ENCODE measurements at regions of chr16 and their contacts with region 1.

Region 1: GRCh38 chr16:4200000-4200780 is 41.7 kb downstream of the SRL start:
- DNase-seq: peak; percentile 63 to 84
- H3K4me3 ChIP-seq: no peak overlapping the region
- H3K27ac ChIP-seq: no peak overlapping the region
- H3K4me1 ChIP-seq: peaks cover 0 to 8% (median 1%) of the 10 kb centered on the region in 4 donors
- H3K27me3 ChIP-seq: no peaks in the 10 kb centered on the region
- CTCF ChIP-seq: peak; percentile 82 to 86

Region 2: GRCh38 chr16:4261557-4262172 is 61.5 kb after region 1 on chr16:
- intact Hi-C with region 1: loop called (anchors 2 kb)
- DNase-seq: no peak
- H3K4me3 ChIP-seq: no peak overlapping the region
- H3K27ac ChIP-seq: no peak overlapping the region
- H3K4me1 ChIP-seq: peaks cover 0 to 11% (median 4%) of the 10 kb centered on the region in 4 donors
- H3K27me3 ChIP-seq: no peaks in the 10 kb centered on the region
- CTCF ChIP-seq: peak; percentile 63 to 67

Region 3: GRCh38 chr16:4328046-4328503 is 127.9 kb after region 1 on chr16:
- intact Hi-C with region 1: loop called (anchors 10 kb)
- DNase-seq: peak; percentile 78 to 92
- H3K4me3 ChIP-seq: peak overlapping the region; percentile 48 to 58
- H3K27ac ChIP-seq: peak overlapping the region; percentile 76 to 99
- H3K4me1 ChIP-seq: peaks cover 8 to 79% (median 69%) of the 10 kb centered on the region in 4 donors
- H3K27me3 ChIP-seq: no peaks in the 10 kb centered on the region
- CTCF ChIP-seq: peak; percentile 67 to 69

Region 4: GRCh38 chr16:4373863-4374742 is 173.9 kb after region 1 on chr16:
- intact Hi-C with region 1: no loop called
- DNase-seq: peak; percentile 94 to 96
- H3K4me3 ChIP-seq: peak overlapping the region; percentile 61 to 97
- H3K27ac ChIP-seq: peak overlapping the region; percentile 92 to 93
- H3K4me1 ChIP-seq: peaks cover 18 to 93% (median 70%) of the 10 kb centered on the region in 4 donors
- H3K27me3 ChIP-seq: no peaks in the 10 kb centered on the region
- CTCF ChIP-seq: no peak